ENCODE measurements at regions of chr7 and their contacts with region 1.

Region 1: GRCh38 chr7:33744293-33745075 is 160.9 kb upstream of the BMPER start:
- DNase-seq: peak; percentile 38
- H3K4me3 ChIP-seq: no peak overlapping the region
- H3K27ac ChIP-seq: peak overlapping the region; percentile 47
- H3K4me1 ChIP-seq: peaks cover 22% of the 10 kb centered on the region
- H3K27me3 ChIP-seq: no peaks in the 10 kb centered on the region
- CTCF ChIP-seq: peak; percentile 36 to 62

Region 2: GRCh38 chr7:33185786-33186185 is 558.7 kb before region 1 on chr7:
- CTCF ChIA-PET with region 1: no interaction called
- dilution Hi-C with region 1: no loop called
- in situ Hi-C with region 1: no loop called
- intact Hi-C with region 1: loop called (anchors 5 kb)
- DNase-seq: peak; percentile 44
- H3K4me3 ChIP-seq: no peak overlapping the region
- H3K27ac ChIP-seq: no peak overlapping the region
- H3K4me1 ChIP-seq: no peaks in the 10 kb centered on the region
- H3K27me3 ChIP-seq: no peaks in the 10 kb centered on the region
- CTCF ChIP-seq: peak; percentile 72 to 74

Region 3: GRCh38 chr7:33243319-33243881 is 501.1 kb before region 1 on chr7:
- CTCF ChIA-PET with region 1: no interaction called
- dilution Hi-C with region 1: no loop called
- in situ Hi-C with region 1: no loop called
- intact Hi-C with region 1: loop called (anchors 5 kb)
- DNase-seq: peak; percentile 27
- H3K4me3 ChIP-seq: no peak overlapping the region
- H3K27ac ChIP-seq: no peak overlapping the region
- H3K4me1 ChIP-seq: no peaks in the 10 kb centered on the region
- H3K27me3 ChIP-seq: no peaks in the 10 kb centered on the region
- CTCF ChIP-seq: peak; percentile 64 to 71

Region 4: GRCh38 chr7:33334349-33334748 is 410.1 kb before region 1 on chr7:
- CTCF ChIA-PET with region 1: no interaction called
- dilution Hi-C with region 1: no loop called
- in situ Hi-C with region 1: no loop called
- intact Hi-C with region 1: loop called (anchors 1 kb)
- DNase-seq: peak; percentile 6
- H3K4me3 ChIP-seq: no peak overlapping the region
- H3K27ac ChIP-seq: no peak overlapping the region
- H3K4me1 ChIP-seq: no peaks in the 10 kb centered on the region
- H3K27me3 ChIP-seq: no peaks in the 10 kb centered on the region
- CTCF ChIP-seq: peak; percentile 47 to 66

Region 5: DNA sequence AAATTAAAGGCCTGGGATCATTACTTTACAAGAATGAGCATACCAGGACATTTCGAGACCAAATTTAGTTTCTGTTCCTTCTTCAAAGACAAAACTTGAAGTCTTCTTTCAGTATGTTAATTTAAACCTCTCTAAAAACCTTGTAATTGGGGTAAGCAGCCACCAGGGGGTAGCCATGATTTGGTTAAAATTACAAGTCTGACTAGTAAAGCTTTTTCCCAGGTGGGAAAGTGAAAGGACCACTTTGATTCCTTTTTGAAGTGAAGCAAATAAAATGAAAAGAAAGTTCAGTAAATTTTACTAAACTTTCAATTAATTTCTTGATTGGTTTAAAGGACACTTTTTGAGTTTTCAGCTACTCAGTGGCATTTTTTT is 320.9 kb before region 1 on chr7:
- CTCF ChIA-PET with region 1: no interaction called
- dilution Hi-C with region 1: no loop called
- in situ Hi-C with region 1: no loop called
- intact Hi-C with region 1: loop called (anchors 5 kb)
- DNase-seq: no peak
- H3K4me3 ChIP-seq: no peak overlapping the region
- H3K27ac ChIP-seq: no peak overlapping the region
- H3K4me1 ChIP-seq: no peaks in the 10 kb centered on the region
- H3K27me3 ChIP-seq: no peaks in the 10 kb centered on the region
- CTCF ChIP-seq: peak; percentile 30 to 53

Region 6: GRCh38 chr7:33459340-33459751 is 285.1 kb before region 1 on chr7:
- CTCF ChIA-PET with region 1: no interaction called
- dilution Hi-C with region 1: no loop called
- in situ Hi-C with region 1: no loop called
- intact Hi-C with region 1: loop called (anchors 1 kb)
- DNase-seq: peak; percentile 37
- H3K4me3 ChIP-seq: no peak overlapping the region
- H3K27ac ChIP-seq: no peak overlapping the region
- H3K4me1 ChIP-seq: no peaks in the 10 kb centered on the region
- H3K27me3 ChIP-seq: peaks cover 5% of the 10 kb centered on the region
- CTCF ChIP-seq: peak; percentile 21 to 60

Region 7: GRCh38 chr7:33716581-33717477 is 27.7 kb before region 1 on chr7:
- CTCF ChIA-PET with region 1: no interaction called
- dilution Hi-C with region 1: no loop called
- in situ Hi-C with region 1: no loop called
- intact Hi-C with region 1: loop called (anchors 1 kb)
- DNase-seq: peak; percentile 37
- H3K4me3 ChIP-seq: no peak overlapping the region
- H3K27ac ChIP-seq: no peak overlapping the region
- H3K4me1 ChIP-seq: peaks cover under 1% of the 10 kb centered on the region
- H3K27me3 ChIP-seq: peaks cover 3% of the 10 kb centered on the region
- CTCF ChIP-seq: peak; percentile 57 to 77